MCF 10A (cell line): ENCODE measurements at regions of chr5 and their contacts with region 1.

Region 1: GRCh38 chr5:155616779-155617392 is 603.3 kb downstream of the KIF4B start:
- DNase-seq: peak; percentile 33
- H3K4me3 Mint-ChIP-seq: no peak overlapping the region
- H3K27ac Mint-ChIP-seq: no peak overlapping the region
- H3K4me1 Mint-ChIP-seq: no peaks in the 10 kb centered on the region
- H3K27me3 Mint-ChIP-seq: no peaks in the 10 kb centered on the region
- CTCF ChIP-seq: peak; percentile 99

Region 2: GRCh38 chr5:155353231-155353630 is 263.7 kb before region 1 on chr5:
- CTCF ChIA-PET with region 1: no interaction called
- POLR2A ChIA-PET with region 1: no interaction called
- intact Hi-C with region 1: no loop called
- DNase-seq: no peak
- H3K4me3 Mint-ChIP-seq: no peak overlapping the region
- H3K27ac Mint-ChIP-seq: no peak overlapping the region
- H3K4me1 Mint-ChIP-seq: no peaks in the 10 kb centered on the region
- H3K27me3 Mint-ChIP-seq: no peaks in the 10 kb centered on the region
- CTCF ChIP-seq: no peak

Region 3: GRCh38 chr5:155575861-155576260 is 41.0 kb before region 1 on chr5:
- CTCF ChIA-PET with region 1: no interaction called
- POLR2A ChIA-PET with region 1: no interaction called
- intact Hi-C with region 1: no loop called
- DNase-seq: no peak
- H3K4me3 Mint-ChIP-seq: no peak overlapping the region
- H3K27ac Mint-ChIP-seq: no peak overlapping the region
- H3K4me1 Mint-ChIP-seq: no peaks in the 10 kb centered on the region
- H3K27me3 Mint-ChIP-seq: no peaks in the 10 kb centered on the region
- CTCF ChIP-seq: no peak

Region 4: GRCh38 chr5:155700333-155700732 is 83.4 kb after region 1 on chr5:
- CTCF ChIA-PET with region 1: interaction called, 3 read pairs
- POLR2A ChIA-PET with region 1: no interaction called
- intact Hi-C with region 1: loop called (anchors 2 kb)
- DNase-seq: peak; percentile 4
- H3K4me3 Mint-ChIP-seq: no peak overlapping the region
- H3K27ac Mint-ChIP-seq: no peak overlapping the region
- H3K4me1 Mint-ChIP-seq: no peaks in the 10 kb centered on the region
- H3K27me3 Mint-ChIP-seq: no peaks in the 10 kb centered on the region
- CTCF ChIP-seq: peak; percentile 56

Region 5: DNA sequence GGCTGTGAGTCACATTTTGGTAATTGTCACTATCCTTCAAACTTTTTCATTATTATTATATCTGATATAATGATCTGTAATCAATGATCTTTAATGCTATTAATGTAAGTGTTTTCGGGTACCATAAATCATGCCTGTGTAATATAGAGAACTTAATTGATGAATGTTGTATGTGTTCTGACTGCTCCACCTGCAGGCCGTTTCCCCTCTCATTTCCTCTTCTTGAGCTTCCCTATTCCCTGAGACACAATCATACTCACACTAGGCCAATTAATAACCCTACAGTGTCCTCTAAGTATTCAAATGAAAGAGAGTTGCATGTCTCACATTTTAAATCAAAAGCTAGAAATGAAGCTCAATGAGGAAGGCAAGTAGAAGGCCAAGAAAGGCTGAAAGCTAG is 289.2 kb after region 1 on chr5:
- CTCF ChIA-PET with region 1: interaction called, 4 read pairs
- POLR2A ChIA-PET with region 1: no interaction called
- intact Hi-C with region 1: loop called (anchors 5 kb)
- DNase-seq: no peak
- H3K4me3 Mint-ChIP-seq: no peak overlapping the region
- H3K27ac Mint-ChIP-seq: no peak overlapping the region
- H3K4me1 Mint-ChIP-seq: no peaks in the 10 kb centered on the region
- H3K27me3 Mint-ChIP-seq: peaks cover 1% of the 10 kb centered on the region
- CTCF ChIP-seq: no peak

Region 6: DNA sequence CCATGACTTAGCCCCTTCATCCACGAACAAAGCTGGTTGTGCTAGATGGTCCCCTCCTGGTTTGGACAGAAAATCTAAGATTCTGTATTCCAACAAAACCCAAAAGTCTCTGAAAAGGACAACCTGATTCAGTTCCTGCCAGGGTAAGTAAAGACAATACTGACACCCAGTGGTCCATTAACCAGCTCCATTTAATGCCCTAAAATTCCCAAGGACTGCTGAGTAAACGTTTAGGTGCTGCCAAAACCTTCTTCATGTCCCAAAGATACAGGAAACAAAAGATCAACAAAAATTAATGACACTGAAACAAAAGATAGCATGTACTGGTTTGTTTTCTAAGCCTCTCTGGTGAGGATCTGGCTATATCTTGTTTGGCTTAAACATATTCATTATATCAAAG is 1207.9 kb after region 1 on chr5:
- CTCF ChIA-PET with region 1: interaction called, 7 read pairs
- POLR2A ChIA-PET with region 1: no interaction called
- intact Hi-C with region 1: loop called (anchors 1 kb)
- DNase-seq: peak; percentile 8
- H3K4me3 Mint-ChIP-seq: no peak overlapping the region
- H3K27ac Mint-ChIP-seq: no peak overlapping the region
- H3K4me1 Mint-ChIP-seq: peaks cover 4% of the 10 kb centered on the region
- H3K27me3 Mint-ChIP-seq: no peaks in the 10 kb centered on the region
- CTCF ChIP-seq: peak; percentile 84

Region 7: DNA sequence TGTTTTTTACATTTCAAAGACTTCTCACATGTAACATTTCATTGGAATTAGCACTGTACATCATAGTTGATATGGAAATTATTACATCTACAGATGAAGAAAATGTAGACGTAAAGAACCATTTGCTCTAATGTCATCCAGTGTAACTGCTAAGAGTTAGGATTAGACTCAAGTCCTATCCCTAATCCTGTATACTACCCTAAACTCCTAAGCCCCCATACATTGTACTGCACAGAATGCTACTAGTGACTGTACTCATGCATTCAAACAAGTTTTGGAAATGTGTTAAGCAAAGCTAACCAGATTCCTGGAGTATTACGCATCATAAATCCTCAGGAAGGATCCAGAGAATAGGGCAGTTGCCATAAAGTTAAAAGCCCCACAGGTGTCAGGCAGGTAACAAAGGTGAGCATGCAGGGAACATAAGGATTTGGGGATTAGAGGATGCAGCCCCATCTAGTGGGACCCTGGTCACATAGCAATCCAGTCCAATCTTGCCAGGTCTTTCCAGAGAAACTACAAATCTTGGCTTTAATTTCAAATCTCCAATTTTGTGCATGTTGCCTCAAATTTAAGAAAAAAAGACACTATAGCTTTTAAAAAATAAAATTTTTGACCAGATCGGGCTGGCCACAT is 1410.0 kb after region 1 on chr5:
- CTCF ChIA-PET with region 1: no interaction called
- POLR2A ChIA-PET with region 1: no interaction called
- intact Hi-C with region 1: loop called (anchors 2 kb)
- DNase-seq: peak; percentile 63
- H3K4me3 Mint-ChIP-seq: no peak overlapping the region
- H3K27ac Mint-ChIP-seq: no peak overlapping the region
- H3K4me1 Mint-ChIP-seq: no peaks in the 10 kb centered on the region
- H3K27me3 Mint-ChIP-seq: peaks cover 47% of the 10 kb centered on the region
- CTCF ChIP-seq: peak; percentile 67